ENCODE measurements at regions of chr17 and their contacts with region 1.

Region 1: GRCh38 chr17:38351412-38352222 is at the start of gene SOCS7:
- DNase-seq: peak; percentile 95
- H3K4me3 ChIP-seq: peak within 1 kb of the TSS; percentile 92 to 99 (median 94)
- H3K27ac ChIP-seq: peak within 1 kb of the TSS; percentile 90 to 94 (median 94)
- H3K4me1 ChIP-seq: peaks cover 2 to 30% (median 23%) of the 10 kb centered on the region in 4 donors
- H3K27me3 ChIP-seq: no peaks in the 10 kb centered on the region
- CTCF ChIP-seq: no peak
- EP300 ChIP-seq: no peak
- POLR2A ChIP-seq: peak; percentile 76
- total RNA-seq, gene SOCS7: 3.0 to 20.1 (median 15.2) TPM

Region 2: GRCh38 chr17:38410201-38410600 is 58.6 kb after region 1 on chr17:
- in situ Hi-C with region 1: loop called (anchors 5 to 10 kb)
- intact Hi-C with region 1: loop called (anchors 2 kb)
- DNase-seq: no peak
- H3K4me3 ChIP-seq: no peak overlapping the region
- H3K27ac ChIP-seq: no peak overlapping the region
- H3K4me1 ChIP-seq: peaks cover 2 to 8% (median 6%) of the 10 kb centered on the region in 4 donors
- H3K27me3 ChIP-seq: peaks cover 3% of the 10 kb centered on the region
- CTCF ChIP-seq: no peak
- EP300 ChIP-seq: no peak
- POLR2A ChIP-seq: no peak

Region 3: GRCh38 chr17:38415250-38416194 is 63.9 kb after region 1 on chr17:
- in situ Hi-C with region 1: loop called (anchors 5 to 10 kb)
- intact Hi-C with region 1: loop called (anchors 2 kb)
- DNase-seq: peak; percentile 40
- H3K4me3 ChIP-seq: no peak overlapping the region
- H3K27ac ChIP-seq: peak overlapping the region in 1 of 4 donors; percentile 27
- H3K4me1 ChIP-seq: peaks cover 8 to 27% (median 18%) of the 10 kb centered on the region in 4 donors
- H3K27me3 ChIP-seq: peaks cover 45% of the 10 kb centered on the region
- CTCF ChIP-seq: no peak
- EP300 ChIP-seq: no peak
- POLR2A ChIP-seq: no peak

Region 4: DNA sequence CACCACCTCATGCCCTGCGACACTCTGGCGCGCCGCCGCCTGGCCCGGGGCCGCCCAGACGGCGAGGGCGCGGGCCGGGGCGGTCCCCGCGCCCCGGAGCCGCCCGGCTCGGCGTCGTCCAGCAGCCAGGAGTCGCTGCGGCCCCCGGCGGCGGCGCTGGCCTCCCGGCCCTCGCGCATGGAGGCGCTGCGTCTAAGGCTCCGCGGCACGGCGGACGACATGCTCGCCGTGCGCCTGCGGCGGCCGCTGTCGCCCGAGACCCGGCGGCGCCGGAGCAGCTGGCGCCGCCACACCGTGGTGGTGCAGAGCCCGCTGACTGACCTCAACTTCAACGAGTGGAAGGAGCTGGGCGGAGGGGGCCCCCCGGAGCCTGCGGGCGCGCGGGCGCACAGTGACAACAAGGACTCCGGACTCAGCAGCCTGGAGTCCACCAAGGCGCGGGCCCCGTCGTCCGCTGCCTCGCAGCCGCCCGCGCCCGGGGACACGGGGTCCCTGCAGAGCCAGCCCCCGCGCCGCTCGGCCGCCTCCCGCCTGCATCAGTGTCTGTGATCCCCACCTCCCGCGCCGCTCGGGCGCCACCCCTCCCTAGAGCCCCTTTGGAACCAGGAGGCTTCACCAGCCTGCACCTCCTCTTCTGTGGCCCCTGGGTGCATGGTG is 158.9 kb after region 1 on chr17:
- in situ Hi-C with region 1: no loop called
- intact Hi-C with region 1: no loop called
- DNase-seq: no peak
- H3K4me3 ChIP-seq: peak overlapping the region in 2 of 4 donors; percentile 18 to 39
- H3K27ac ChIP-seq: no peak overlapping the region
- H3K4me1 ChIP-seq: peaks cover 0 to 16% (median 14%) of the 10 kb centered on the region in 4 donors
- H3K27me3 ChIP-seq: peaks cover 36% of the 10 kb centered on the region
- CTCF ChIP-seq: no peak
- EP300 ChIP-seq: no peak
- POLR2A ChIP-seq: no peak